ENCODE measurements at regions of chr2 and their contacts with region 1.

Region 1: DNA sequence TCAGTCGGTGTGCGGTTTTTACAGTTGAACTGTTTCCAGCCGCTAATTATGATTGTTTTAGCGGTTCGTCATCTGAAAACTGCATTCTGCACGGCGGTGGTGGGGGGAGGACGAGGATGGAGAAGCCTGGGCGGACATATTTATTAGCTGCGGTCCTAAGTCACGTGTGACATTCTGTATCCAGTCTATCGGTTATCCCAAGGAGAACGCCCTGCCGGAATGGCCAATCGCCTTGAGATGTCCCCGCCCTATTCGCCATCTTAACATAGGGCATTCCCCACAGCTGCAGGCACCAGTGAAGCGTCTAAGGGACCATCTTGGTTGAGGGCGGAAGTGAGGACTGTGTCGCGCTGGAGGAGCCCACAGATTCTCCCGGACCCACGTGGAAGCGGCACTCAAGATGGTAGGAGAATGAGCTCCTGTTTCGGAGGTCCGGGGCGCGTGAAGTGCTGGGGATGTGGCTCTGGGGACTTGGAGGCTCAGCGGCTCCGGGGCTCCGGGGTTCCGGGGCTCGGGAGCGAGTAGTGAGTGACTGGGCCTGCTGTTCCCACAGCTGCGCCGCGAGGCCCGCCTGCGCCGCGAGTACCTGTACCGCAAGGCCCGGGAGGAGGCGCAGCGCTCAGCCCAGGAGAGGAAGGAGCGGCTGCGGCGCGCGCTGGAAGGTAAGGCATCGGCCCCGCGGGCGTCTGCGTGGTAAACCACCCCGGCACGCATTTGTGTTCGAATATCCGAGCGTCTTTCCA is at the start of gene IMP4:
- DNase-seq: peak; percentile 98
- H3K4me3 ChIP-seq: peak within 1 kb of the TSS; percentile 95
- H3K27ac ChIP-seq: peak within 1 kb of the TSS; percentile 94
- H3K27me3 ChIP-seq: no peaks in the 10 kb centered on the region
- CTCF ChIP-seq: peak; percentile 42
- polyA plus RNA-seq, gene IMP4: 51.0 and 79.5 TPM in 2 replicates

Region 2: DNA sequence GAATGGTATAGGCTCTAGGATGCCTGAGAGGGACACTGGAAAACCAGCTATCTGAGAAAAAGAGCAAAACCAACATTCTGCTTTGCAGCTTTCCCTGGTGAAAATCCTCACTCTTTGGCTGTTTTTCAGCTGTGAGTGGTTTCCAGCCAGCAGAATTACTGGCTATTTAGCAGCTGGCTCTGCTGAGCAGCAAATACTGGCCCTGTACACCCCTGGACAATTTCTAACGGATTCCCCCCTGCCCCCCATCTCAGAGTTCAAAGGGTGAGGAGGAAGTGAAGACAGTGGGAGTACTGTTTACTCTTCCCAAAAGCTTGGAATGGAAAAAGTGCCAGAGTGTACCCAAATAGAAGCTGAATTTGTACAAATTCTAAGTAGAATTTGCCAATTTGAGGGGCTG is 26.1 kb before region 1 on chr2:
- CTCF ChIA-PET with region 1: no interaction called
- POLR2A ChIA-PET with region 1: no interaction called
- DNase-seq: no peak
- H3K4me3 ChIP-seq: no peak overlapping the region
- H3K27ac ChIP-seq: no peak overlapping the region
- H3K27me3 ChIP-seq: no peaks in the 10 kb centered on the region
- CTCF ChIP-seq: no peak

Region 3: GRCh38 chr2:130355578-130356431 is 13.1 kb after region 1 on chr2 and contains the start of gene PTPN18:
- CTCF ChIA-PET with region 1: interaction called, 5 read pairs
- POLR2A ChIA-PET with region 1: interaction called, 22 read pairs
- DNase-seq: peak; percentile 61
- H3K4me3 ChIP-seq: peak within 1 kb of the TSS; percentile 68
- H3K27ac ChIP-seq: no peak within 1 kb of the TSS
- H3K27me3 ChIP-seq: no peaks in the 10 kb centered on the region
- CTCF ChIP-seq: peak; percentile 50
- polyA plus RNA-seq, gene PTPN18: 10.1 and 11.6 TPM in 2 replicates